ENCODE measurements at regions of chr3 and their contacts with region 1.

Region 1: DNA sequence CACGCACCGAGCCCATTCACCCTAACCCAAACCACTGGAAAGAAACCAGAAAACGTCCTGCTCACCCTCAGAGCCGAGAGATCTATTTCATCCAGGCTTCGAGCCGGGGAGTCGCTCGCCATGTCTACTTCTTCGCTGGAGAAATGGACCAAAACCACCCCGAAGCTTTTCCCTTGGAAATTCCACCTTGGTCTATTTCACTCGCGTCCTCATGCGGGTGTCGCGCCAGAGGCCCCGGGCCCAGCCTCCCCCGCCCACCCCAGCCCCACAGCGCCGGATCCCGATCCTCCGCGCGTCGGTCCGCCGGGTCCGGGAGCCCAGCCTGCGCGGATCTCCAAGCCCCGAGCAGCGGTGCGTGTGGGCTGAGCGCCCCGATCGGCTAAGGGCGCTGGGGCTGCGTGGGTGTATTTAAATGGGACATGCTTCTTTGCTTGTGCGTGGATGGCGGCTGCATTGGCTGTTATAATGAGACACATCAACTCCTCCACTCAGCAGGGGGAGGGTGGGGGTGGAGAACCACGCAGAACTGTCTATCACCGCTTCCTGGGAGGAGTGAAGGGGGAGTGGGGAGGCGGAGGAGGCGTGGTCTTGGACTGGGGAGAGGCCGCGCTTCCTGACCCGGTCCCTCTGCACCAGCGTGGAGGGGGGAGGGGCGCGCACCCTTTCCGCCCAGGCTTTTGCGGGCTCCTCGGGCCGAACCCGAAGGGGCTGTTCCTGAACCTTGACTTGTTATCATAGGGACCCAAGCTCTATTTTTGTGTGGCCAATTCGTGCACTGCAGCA is at the start of gene TNIK:
- DNase-seq: peak; percentile 88
- ATAC-seq: peak; percentile 82
- H3K4me3 ChIP-seq: peak within 1 kb of the TSS; percentile 84
- H3K27ac ChIP-seq: peak within 1 kb of the TSS; percentile 62
- H3K4me1 ChIP-seq: peaks cover 30% of the 10 kb centered on the region
- H3K27me3 ChIP-seq: no peaks in the 10 kb centered on the region
- CTCF ChIP-seq: no peak
- total RNA-seq, gene TNIK: 7.0 and 12.0 TPM in 2 replicates

Region 2: DNA sequence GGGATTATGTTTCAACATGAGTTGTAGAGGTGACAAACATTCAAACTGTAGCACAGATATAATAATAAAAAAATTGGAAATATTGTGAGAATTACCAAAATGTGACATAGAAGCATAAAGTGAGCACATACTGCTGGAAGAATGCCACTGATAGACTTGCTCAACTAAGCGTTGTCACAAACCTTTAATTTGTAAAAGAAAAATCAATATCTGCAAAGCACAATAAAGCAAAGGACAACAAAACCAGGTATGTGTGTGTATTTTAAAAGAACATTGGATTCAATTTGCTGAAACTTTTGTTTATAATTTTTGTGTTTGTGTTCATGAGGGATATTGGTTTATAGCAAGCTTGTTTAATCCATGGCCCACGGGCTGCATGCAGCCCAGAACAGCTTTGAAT is 510.9 kb before region 1 on chr3:
- CTCF ChIA-PET with region 1: no interaction called
- POLR2A ChIA-PET with region 1: interaction called, 19 read pairs
- intact Hi-C with region 1: no loop called
- DNase-seq: no peak
- ATAC-seq: no peak
- H3K4me3 ChIP-seq: no peak overlapping the region
- H3K27ac ChIP-seq: no peak overlapping the region
- H3K4me1 ChIP-seq: no peaks in the 10 kb centered on the region
- H3K27me3 ChIP-seq: no peaks in the 10 kb centered on the region
- CTCF ChIP-seq: no peak

Region 3: GRCh38 chr3:171055336-171056178 is 404.6 kb before region 1 on chr3:
- CTCF ChIA-PET with region 1: no interaction called
- POLR2A ChIA-PET with region 1: no interaction called
- intact Hi-C with region 1: loop called (anchors 5 kb)
- DNase-seq: peak; percentile 94
- ATAC-seq: peak; percentile 78
- H3K4me3 ChIP-seq: peak overlapping the region; percentile 18; the same call in 1 of the 2 replicates
- H3K27ac ChIP-seq: peak overlapping the region; percentile 88
- H3K4me1 ChIP-seq: peaks cover 31% of the 10 kb centered on the region
- H3K27me3 ChIP-seq: no peaks in the 10 kb centered on the region
- CTCF ChIP-seq: no peak

Region 4: GRCh38 chr3:171286580-171287249 is 173.4 kb before region 1 on chr3:
- CTCF ChIA-PET with region 1: no interaction called
- POLR2A ChIA-PET with region 1: no interaction called
- intact Hi-C with region 1: no loop called
- DNase-seq: peak; percentile 16
- ATAC-seq: no peak
- H3K4me3 ChIP-seq: no peak overlapping the region
- H3K27ac ChIP-seq: no peak overlapping the region
- H3K4me1 ChIP-seq: peaks cover 12% of the 10 kb centered on the region
- H3K27me3 ChIP-seq: no peaks in the 10 kb centered on the region
- CTCF ChIP-seq: no peak

Region 5: DNA sequence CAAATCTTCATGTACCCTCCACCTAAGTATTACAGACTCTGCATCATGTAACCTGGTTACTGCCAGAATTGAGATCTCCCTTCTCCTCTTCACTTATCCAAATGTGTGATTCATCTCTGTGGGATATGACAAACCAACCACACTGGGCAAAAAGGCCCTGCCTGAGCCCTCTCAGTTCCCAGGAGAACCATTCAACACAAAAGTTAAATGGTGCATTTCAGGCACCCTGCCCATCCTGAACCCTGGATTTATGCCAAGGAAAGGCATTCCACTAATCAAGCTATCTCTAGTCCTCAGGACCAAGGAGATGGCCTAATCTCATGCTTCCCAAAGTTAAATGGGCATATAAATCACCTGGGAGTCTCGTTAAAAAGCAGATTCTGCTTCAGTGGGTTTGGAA is 108.5 kb before region 1 on chr3:
- CTCF ChIA-PET with region 1: no interaction called
- POLR2A ChIA-PET with region 1: interaction called, 13 read pairs
- intact Hi-C with region 1: loop called (anchors 5 kb)
- DNase-seq: peak; percentile 98
- ATAC-seq: peak; percentile 76
- H3K4me3 ChIP-seq: no peak overlapping the region
- H3K27ac ChIP-seq: peak overlapping the region; percentile 76
- H3K4me1 ChIP-seq: peaks cover 80% of the 10 kb centered on the region
- H3K27me3 ChIP-seq: no peaks in the 10 kb centered on the region
- CTCF ChIP-seq: no peak

Region 6: GRCh38 chr3:171374661-171375285 is 85.4 kb before region 1 on chr3:
- CTCF ChIA-PET with region 1: no interaction called
- POLR2A ChIA-PET with region 1: no interaction called
- intact Hi-C with region 1: loop called (anchors 5 kb)
- DNase-seq: peak; percentile 59
- ATAC-seq: peak; percentile 65
- H3K4me3 ChIP-seq: no peak overlapping the region
- H3K27ac ChIP-seq: peak overlapping the region; percentile 19
- H3K4me1 ChIP-seq: peaks cover 23% of the 10 kb centered on the region
- H3K27me3 ChIP-seq: no peaks in the 10 kb centered on the region
- CTCF ChIP-seq: no peak

Region 7: GRCh38 chr3:171672124-171672523 is 212.0 kb after region 1 on chr3:
- CTCF ChIA-PET with region 1: no interaction called
- POLR2A ChIA-PET with region 1: interaction called, 17 read pairs
- intact Hi-C with region 1: no loop called
- DNase-seq: peak; percentile 59
- ATAC-seq: peak; percentile 92
- H3K4me3 ChIP-seq: no peak overlapping the region
- H3K27ac ChIP-seq: no peak overlapping the region
- H3K4me1 ChIP-seq: no peaks in the 10 kb centered on the region
- H3K27me3 ChIP-seq: no peaks in the 10 kb centered on the region
- CTCF ChIP-seq: no peak

Measured in PC-3 (cell line).